Left ventricle myocardium inferior (tissue), 1 donor: ENCODE measurements at regions of chr17 and their contacts with region 1.

Region 1: GRCh38 chr17:70535986-70536385 is 366.7 kb downstream of the KCNJ2 start:
- DNase-seq: no peak
- H3K4me3 ChIP-seq: no peak overlapping the region
- H3K27ac ChIP-seq: no peak overlapping the region
- H3K4me1 ChIP-seq: no peaks in the 10 kb centered on the region
- H3K27me3 ChIP-seq: no peaks in the 10 kb centered on the region
- CTCF ChIP-seq: no peak

Region 2: GRCh38 chr17:70604854-70605253 is 68.9 kb after region 1 on chr17:
- intact Hi-C with region 1: loop called (anchors 10 kb)
- DNase-seq: no peak
- H3K4me3 ChIP-seq: no peak overlapping the region
- H3K27ac ChIP-seq: peak overlapping the region; percentile 18
- H3K4me1 ChIP-seq: no peaks in the 10 kb centered on the region
- H3K27me3 ChIP-seq: no peaks in the 10 kb centered on the region
- CTCF ChIP-seq: no peak